CD8-positive, alpha-beta T cell (primary cell): ENCODE measurements at regions of chr15 and their contacts with region 1.

Region 1: GRCh38 chr15:66386204-66387123 is at the start of gene MAP2K1:
- DNase-seq: peak; percentile 96 to 100 (median 99)
- ATAC-seq: peak; percentile 88
- H3K4me3 ChIP-seq: peak within 1 kb of the TSS; percentile 62 to 72
- H3K4me3 Mint-ChIP-seq: peak within 1 kb of the TSS; percentile 95
- H3K27ac ChIP-seq: peak within 1 kb of the TSS; percentile 85 to 90
- H3K27ac Mint-ChIP-seq: peak within 1 kb of the TSS; percentile 99
- H3K4me1 ChIP-seq: peaks cover 51% of the 10 kb centered on the region
- H3K4me1 Mint-ChIP-seq: peaks cover 46% of the 10 kb centered on the region
- H3K27me3 ChIP-seq: no peaks in the 10 kb centered on the region
- H3K27me3 Mint-ChIP-seq: no peaks in the 10 kb centered on the region
- CTCF ChIP-seq: peak; percentile 71
- total RNA-seq, gene MAP2K1: 21.9 to 23.7 TPM

Region 2: DNA sequence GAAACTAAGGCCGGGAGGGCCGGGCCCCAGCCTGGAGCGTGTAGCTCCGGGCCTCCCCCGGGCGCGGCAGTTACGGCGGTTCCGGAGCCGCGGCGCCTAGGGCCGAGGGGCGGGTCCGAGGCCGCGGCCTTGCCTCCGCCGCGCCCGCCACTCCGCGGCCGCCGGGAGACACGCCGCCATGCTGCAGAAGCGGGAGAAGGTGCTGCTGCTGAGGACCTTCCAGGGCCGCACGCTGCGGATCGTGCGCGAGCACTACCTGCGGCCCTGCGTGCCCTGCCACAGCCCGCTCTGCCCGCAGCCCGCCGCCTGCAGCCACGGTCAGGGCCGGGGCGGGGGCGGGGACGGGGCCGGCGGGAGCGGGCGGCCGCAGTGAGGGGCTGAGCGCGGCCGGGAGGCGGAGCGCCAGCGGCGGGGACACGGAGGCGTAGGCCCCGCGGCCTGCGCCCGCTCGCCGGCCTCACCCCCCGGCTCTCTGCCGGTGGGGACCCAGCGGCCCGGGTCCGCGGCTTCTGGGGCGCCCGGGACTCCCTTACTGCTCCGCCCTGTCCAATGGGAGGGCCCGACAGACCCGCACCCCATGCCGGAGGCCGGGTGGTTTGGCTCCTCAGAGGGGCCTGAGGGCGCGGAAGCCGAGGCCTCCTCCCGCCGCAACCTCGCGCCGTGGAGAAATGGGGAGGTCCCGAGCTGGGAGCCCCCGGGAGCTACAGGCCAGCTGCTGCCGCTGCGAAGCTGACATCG is 92.9 kb before region 1 on chr15 and contains the start of gene DIS3L:
- CTCF ChIA-PET with region 1: no interaction called
- POLR2A ChIA-PET with region 1: interaction called, 4 read pairs
- intact Hi-C with region 1: loop called (anchors 2 to 10 kb)
- DNase-seq: peak; percentile 21 to 83 (median 60)
- ATAC-seq: peak; percentile 72
- H3K4me3 ChIP-seq: peak within 1 kb of the TSS; percentile 67 to 72
- H3K4me3 Mint-ChIP-seq: peak within 1 kb of the TSS; percentile 86
- H3K27ac ChIP-seq: peak within 1 kb of the TSS; percentile 86 to 95
- H3K27ac Mint-ChIP-seq: peak within 1 kb of the TSS; percentile 93
- H3K4me1 ChIP-seq: peaks cover 39% of the 10 kb centered on the region
- H3K4me1 Mint-ChIP-seq: peaks cover 49% of the 10 kb centered on the region
- H3K27me3 ChIP-seq: no peaks in the 10 kb centered on the region
- H3K27me3 Mint-ChIP-seq: no peaks in the 10 kb centered on the region
- CTCF ChIP-seq: no peak
- total RNA-seq, gene DIS3L: 16.6 to 18.8 TPM

Region 3: GRCh38 chr15:66401130-66402021 is 14.9 kb after region 1 on chr15:
- CTCF ChIA-PET with region 1: interaction called, 6 read pairs
- POLR2A ChIA-PET with region 1: interaction called, 6 read pairs
- intact Hi-C with region 1: loop called in 1 of 2 experiments (anchors 2 kb)
- DNase-seq: peak in 4 of 9 experiments; percentile 5 to 36 (median 14)
- ATAC-seq: peak; percentile 40
- H3K4me3 ChIP-seq: no peak overlapping the region
- H3K4me3 Mint-ChIP-seq: peak overlapping the region; percentile 77
- H3K27ac ChIP-seq: no peak overlapping the region
- H3K27ac Mint-ChIP-seq: peak overlapping the region; percentile 88
- H3K4me1 ChIP-seq: peaks cover 62% of the 10 kb centered on the region
- H3K4me1 Mint-ChIP-seq: peaks cover 73% of the 10 kb centered on the region
- H3K27me3 ChIP-seq: no peaks in the 10 kb centered on the region
- H3K27me3 Mint-ChIP-seq: no peaks in the 10 kb centered on the region
- CTCF ChIP-seq: no peak

Region 4: DNA sequence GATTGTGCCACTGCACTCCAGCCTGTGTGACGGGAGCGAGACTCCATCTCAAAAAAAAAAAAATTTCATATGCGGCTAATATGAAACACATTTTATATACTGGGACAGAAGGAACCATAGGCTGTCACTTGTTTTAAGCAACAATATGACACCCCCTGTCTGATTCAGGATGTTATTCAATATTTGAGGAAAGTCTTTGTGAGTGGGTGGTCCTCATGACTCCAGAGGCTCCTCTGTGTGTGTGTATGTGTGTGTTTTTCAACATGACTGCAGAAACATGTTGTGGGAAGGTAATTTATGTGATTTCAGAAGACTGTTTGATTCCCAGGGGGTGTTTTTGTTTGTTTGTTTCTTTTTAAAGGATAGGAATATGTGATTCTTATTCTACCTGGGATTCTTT is 33.0 kb after region 1 on chr15:
- CTCF ChIA-PET with region 1: no interaction called
- POLR2A ChIA-PET with region 1: no interaction called
- intact Hi-C with region 1: no loop called
- DNase-seq: no peak
- ATAC-seq: no peak
- H3K4me3 ChIP-seq: no peak overlapping the region
- H3K4me3 Mint-ChIP-seq: no peak overlapping the region
- H3K27ac ChIP-seq: no peak overlapping the region
- H3K27ac Mint-ChIP-seq: no peak overlapping the region
- H3K4me1 ChIP-seq: peaks cover 8% of the 10 kb centered on the region
- H3K4me1 Mint-ChIP-seq: peaks cover 56% of the 10 kb centered on the region
- H3K27me3 ChIP-seq: no peaks in the 10 kb centered on the region
- H3K27me3 Mint-ChIP-seq: no peaks in the 10 kb centered on the region
- CTCF ChIP-seq: no peak

Region 5: DNA sequence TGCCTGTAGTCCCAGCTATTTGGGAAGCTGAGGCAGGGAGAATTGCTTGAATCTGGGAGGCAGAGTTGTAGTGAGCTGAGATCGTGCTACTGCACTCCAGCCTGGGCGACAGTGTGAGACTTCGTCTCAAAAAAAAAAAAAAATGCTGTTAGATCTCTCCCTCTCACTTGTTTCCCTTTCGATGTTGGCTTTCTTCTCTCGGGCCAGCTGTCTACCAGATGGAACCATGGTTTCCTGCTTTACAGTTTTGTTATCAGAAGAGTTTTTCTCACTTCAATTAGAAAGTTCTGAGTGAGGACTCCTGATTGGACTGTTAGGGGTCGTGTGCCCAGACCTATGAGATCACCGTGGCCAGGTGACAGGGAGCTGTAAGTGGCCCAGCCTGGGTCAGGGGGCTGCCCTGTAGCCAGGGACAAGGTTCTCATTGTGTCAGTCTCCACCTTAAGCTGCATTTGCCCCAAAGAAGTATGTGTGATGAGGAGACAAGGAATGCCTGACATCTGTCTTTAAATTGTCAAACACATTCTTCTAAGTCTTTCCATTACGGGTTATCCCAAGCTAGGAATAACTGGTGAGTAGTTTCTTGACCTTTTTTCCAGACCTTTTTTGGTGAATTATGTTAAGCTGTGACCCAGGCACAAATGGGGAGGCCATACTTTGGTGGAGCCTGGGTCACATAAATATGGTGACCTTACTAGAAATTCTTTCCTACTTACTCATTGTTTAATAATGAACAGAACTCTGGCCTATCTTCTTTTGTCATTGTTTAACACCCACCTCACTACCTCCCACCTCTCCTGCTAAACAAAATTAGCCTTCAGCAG is 85.9 kb after region 1 on chr15:
- CTCF ChIA-PET with region 1: interaction called, 11 read pairs
- POLR2A ChIA-PET with region 1: interaction called, 4 read pairs
- intact Hi-C with region 1: loop called in 1 of 2 experiments (anchors 1 kb)
- DNase-seq: peak in 8 of 9 experiments; percentile 1 to 86 (median 40)
- ATAC-seq: peak; percentile 92
- H3K4me3 ChIP-seq: no peak overlapping the region
- H3K4me3 Mint-ChIP-seq: peak overlapping the region; percentile 80
- H3K27ac ChIP-seq: peak overlapping the region; percentile 30 to 65
- H3K27ac Mint-ChIP-seq: peak overlapping the region; percentile 95
- H3K4me1 ChIP-seq: peaks cover 22% of the 10 kb centered on the region
- H3K4me1 Mint-ChIP-seq: peaks cover 36% of the 10 kb centered on the region
- H3K27me3 ChIP-seq: no peaks in the 10 kb centered on the region
- H3K27me3 Mint-ChIP-seq: no peaks in the 10 kb centered on the region
- CTCF ChIP-seq: no peak

Region 6: GRCh38 chr15:66504563-66505429 is 118.3 kb after region 1 on chr15 and contains the starts of genes RPL4 and ZWILCH:
- CTCF ChIA-PET with region 1: interaction called, 71 read pairs
- POLR2A ChIA-PET with region 1: interaction called, 63 read pairs
- intact Hi-C with region 1: loop called in 1 of 2 experiments (anchors 1 kb)
- DNase-seq: peak; percentile 67 to 92 (median 80)
- ATAC-seq: peak; percentile 86
- H3K4me3 ChIP-seq: peak within 1 kb of the TSS; percentile 88 to 95
- H3K4me3 Mint-ChIP-seq: peak within 1 kb of the TSS; percentile 100
- H3K27ac ChIP-seq: peak within 1 kb of the TSS; percentile 90 to 97
- H3K27ac Mint-ChIP-seq: peak within 1 kb of the TSS; percentile 99
- H3K4me1 ChIP-seq: peaks cover 32% of the 10 kb centered on the region
- H3K4me1 Mint-ChIP-seq: peaks cover 44% of the 10 kb centered on the region
- H3K27me3 ChIP-seq: no peaks in the 10 kb centered on the region
- H3K27me3 Mint-ChIP-seq: no peaks in the 10 kb centered on the region
- CTCF ChIP-seq: no peak
- total RNA-seq, gene RPL4: 4,516 to 4,651 TPM
- total RNA-seq, gene ZWILCH: 7.9 to 8.5 TPM

Region 7: GRCh38 chr15:66611257-66612053 is 225.0 kb after region 1 on chr15:
- CTCF ChIA-PET with region 1: no interaction called
- POLR2A ChIA-PET with region 1: no interaction called
- intact Hi-C with region 1: no loop called
- DNase-seq: no peak
- ATAC-seq: no peak
- H3K4me3 ChIP-seq: no peak overlapping the region
- H3K4me3 Mint-ChIP-seq: no peak overlapping the region
- H3K27ac ChIP-seq: no peak overlapping the region
- H3K27ac Mint-ChIP-seq: no peak overlapping the region
- H3K4me1 ChIP-seq: peaks cover 7% of the 10 kb centered on the region
- H3K4me1 Mint-ChIP-seq: peaks cover 12% of the 10 kb centered on the region
- H3K27me3 ChIP-seq: no peaks in the 10 kb centered on the region
- H3K27me3 Mint-ChIP-seq: no peaks in the 10 kb centered on the region
- CTCF ChIP-seq: no peak